Mammary epithelial cell (primary cell): ENCODE measurements at regions of chr2 and their contacts with region 1.

Region 1: GRCh38 chr2:70698847-70699246 is 69.2 kb downstream of the ADD2 start:
- DNase-seq: no peak
- H3K4me3 ChIP-seq: no peak overlapping the region
- H3K27ac ChIP-seq: no peak overlapping the region
- H3K4me1 ChIP-seq: no peaks in the 10 kb centered on the region
- H3K27me3 ChIP-seq: peaks cover 2% of the 10 kb centered on the region
- CTCF ChIP-seq: no peak

Region 2: DNA sequence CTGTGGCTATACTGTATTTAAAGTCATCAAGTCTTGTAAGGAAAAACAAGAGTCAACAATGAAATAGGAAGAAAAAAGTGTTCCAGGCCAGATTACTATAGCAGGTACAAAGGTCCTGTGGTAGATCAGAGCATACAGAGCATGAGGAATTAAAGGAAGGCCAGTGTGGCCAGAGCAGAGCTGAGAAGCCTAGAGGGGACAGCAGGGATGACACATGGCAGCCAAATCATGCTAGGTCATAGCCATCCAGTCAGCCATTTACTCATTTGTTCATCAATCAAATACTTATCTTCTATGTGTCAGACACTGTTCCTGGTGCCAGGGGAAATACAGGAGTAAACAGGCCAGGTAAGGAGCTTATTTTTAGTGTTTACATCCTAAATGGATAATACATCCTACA is 44.8 kb after region 1 on chr2:
- CTCF ChIA-PET with region 1: no interaction called
- dilution Hi-C with region 1: loop called (anchors 5 kb)
- in situ Hi-C with region 1: no loop called
- intact Hi-C with region 1: no loop called
- DNase-seq: no peak
- H3K4me3 ChIP-seq: no peak overlapping the region
- H3K27ac ChIP-seq: no peak overlapping the region
- H3K4me1 ChIP-seq: no peaks in the 10 kb centered on the region
- H3K27me3 ChIP-seq: no peaks in the 10 kb centered on the region
- CTCF ChIP-seq: no peak